Panc1 (cell line): ENCODE measurements at regions of chr1 and their contacts with region 1.

Region 1: DNA sequence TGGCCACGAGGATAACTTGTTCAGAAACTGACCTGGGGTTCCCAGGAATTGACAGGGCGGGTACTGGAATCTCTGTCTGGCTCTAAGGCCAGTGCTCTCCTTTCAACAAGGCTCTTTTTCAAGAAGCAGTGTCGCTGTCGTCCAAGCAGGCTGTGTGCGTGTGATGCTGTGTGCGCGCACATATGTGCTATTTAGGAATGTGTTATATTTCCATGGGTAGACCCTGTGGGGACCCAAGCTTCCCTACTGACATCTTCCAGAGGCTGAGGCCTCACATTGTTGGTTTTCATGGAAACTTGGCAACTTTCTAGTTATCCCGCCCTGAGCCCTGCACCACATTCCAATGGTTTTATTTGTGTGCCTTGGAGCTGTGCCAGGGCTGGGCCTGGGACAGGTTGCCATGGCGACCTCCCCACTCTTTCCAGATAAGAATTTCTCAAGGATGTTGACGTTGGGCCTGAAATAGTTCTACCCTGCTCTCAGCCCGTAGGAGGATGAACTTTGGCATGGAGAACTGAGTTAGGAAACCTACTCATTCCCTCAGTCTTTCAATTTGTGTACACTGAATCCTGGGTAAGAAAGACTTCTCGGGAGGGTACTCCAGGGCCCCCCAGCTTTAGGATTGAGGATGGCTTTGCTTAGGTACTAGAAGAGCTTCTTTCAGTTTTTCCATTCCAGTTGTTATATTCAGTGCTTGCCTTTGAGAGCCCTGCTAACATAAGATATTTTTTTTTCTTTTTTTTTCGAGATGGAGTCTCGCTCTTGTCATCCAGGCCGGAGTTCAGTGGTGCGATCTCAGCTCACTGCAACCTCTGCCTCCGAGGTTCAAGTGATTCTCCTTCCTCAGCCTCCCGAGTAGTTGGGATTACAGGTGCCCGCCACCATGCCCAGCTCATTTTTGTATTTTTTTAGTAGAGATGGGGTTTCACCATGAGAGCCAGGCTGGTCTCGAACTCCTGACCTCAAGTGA is 38.8 kb upstream of the SRSF10 start:
- DNase-seq: peak; percentile 87
- ATAC-seq: peak; percentile 89
- H3K4me3 ChIP-seq: peak overlapping the region in 1 of 2 experiments; percentile 25; a peak in 2 of 4 replicates
- H3K27ac ChIP-seq: peak overlapping the region; percentile 87
- H3K4me1 ChIP-seq: peaks cover 67% of the 10 kb centered on the region
- H3K27me3 ChIP-seq: no peaks in the 10 kb centered on the region
- CTCF ChIP-seq: no peak

Region 2: GRCh38 chr1:23768733-23769132 is 250.2 kb before region 1 on chr1:
- CTCF ChIA-PET with region 1: no interaction called
- POLR2A ChIA-PET with region 1: no interaction called
- in situ Hi-C with region 1: no loop called
- intact Hi-C with region 1: no loop called
- DNase-seq: no peak
- ATAC-seq: no peak
- H3K4me3 ChIP-seq: no peak overlapping the region
- H3K27ac ChIP-seq: no peak overlapping the region
- H3K4me1 ChIP-seq: peaks cover 2% of the 10 kb centered on the region; the same call in 1 of the 2 replicates
- H3K27me3 ChIP-seq: no peaks in the 10 kb centered on the region
- CTCF ChIP-seq: no peak

Region 3: DNA sequence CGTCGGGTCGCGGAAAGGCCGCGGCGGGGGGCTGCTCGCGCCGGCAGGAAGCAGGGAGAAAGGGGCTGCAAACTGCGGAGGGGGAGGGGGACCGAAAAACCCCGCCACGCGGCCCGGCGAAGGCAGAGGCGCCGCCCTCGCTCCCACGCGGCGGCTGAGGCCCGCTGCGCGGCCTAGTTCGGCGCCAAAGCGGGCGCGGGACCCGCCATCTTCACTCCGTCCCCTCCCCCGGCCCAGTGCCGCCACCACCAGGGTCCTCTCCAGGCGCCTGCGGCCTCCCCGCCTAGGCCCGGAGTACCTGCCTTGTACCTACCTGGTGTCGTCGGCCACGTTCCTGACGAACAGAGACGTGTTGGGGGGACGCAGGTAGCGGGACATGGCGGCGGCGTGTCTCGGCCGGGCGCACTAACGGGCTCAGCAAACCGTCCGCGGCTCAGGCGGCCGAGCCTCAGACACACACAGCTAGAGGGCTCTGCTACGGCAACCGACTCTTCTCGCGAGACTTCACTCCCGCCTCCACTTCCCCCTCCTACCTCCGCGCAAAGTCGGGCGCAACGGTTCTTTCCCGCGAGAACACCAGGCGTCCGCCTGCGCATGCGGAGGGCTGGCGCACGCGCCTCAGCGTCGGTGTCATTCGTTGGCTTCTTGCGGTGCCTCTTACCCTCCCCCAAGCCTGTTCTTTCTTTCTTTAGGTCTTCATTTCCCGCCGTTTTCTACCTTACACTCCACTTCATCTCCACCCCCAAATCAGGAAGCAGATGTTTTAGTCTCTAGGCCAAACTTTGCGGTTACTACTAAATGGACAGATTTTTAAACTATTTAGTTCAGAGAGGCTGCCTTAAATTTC is 38.8 kb before region 1 on chr1 and contains the start of gene SRSF10:
- CTCF ChIA-PET with region 1: no interaction called
- POLR2A ChIA-PET with region 1: no interaction called
- in situ Hi-C with region 1: no loop called
- intact Hi-C with region 1: loop called (anchors 5 kb)
- DNase-seq: peak; percentile 97
- ATAC-seq: peak; percentile 98
- H3K4me3 ChIP-seq: peak within 1 kb of the TSS; percentile 70 to 91
- H3K27ac ChIP-seq: peak within 1 kb of the TSS; percentile 100
- H3K4me1 ChIP-seq: peaks cover 52% of the 10 kb centered on the region
- H3K27me3 ChIP-seq: no peaks in the 10 kb centered on the region
- CTCF ChIP-seq: no peak; the same call in 1 of the 2 replicates
- total RNA-seq, gene SRSF10: 137 TPM